ENCODE measurements at regions of chr6 and their contacts with region 1.

Region 1: GRCh38 chr6:108616544-108616943 is 55.8 kb downstream of the FOXO3 start:
- DNase-seq: no peak
- ATAC-seq: no peak
- H3K4me3 ChIP-seq: no peak overlapping the region
- H3K27ac ChIP-seq: peak overlapping the region in 1 of 10 donors; percentile 6
- H3K4me1 ChIP-seq: peaks cover 17 to 92% (median 80%) of the 10 kb centered on the region in 9 donors
- H3K27me3 ChIP-seq: no peaks in the 10 kb centered on the region
- CTCF ChIP-seq: no peak

Region 2: DNA sequence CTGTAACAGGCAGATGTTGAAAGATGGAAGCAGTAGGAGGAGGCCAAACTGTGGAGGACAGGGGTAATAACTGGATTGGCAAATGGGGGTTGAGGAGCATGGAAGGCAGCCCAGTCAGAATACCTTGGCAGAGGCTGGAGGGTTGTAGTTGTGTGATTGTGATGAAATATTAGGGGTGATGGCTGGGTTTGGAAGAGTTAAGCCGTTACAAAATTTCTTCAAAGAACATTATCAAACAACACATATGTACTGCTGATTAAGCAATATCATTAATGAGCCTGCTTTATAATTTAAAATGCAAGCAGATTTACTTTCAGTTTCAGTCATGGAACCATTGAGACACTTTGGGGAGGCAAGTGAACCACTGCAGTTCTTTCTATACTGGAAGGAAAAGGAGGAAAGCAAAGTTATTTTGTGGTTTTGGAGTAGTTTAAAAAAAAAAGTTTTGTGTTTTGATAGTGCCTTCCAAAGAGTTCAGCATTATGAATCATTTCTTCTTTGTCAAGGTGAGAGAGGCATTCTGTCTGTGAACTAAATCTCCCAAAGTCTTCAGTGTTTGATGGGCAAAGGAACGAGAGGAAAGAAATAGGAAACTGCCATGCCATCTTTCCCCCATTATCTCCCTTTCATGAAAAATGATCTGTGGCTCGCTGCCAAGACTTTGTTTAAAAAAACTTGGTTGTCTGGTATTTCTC is 35.2 kb before region 1 on chr6:
- intact Hi-C with region 1: loop called in 1 of 10 experiments (anchors 5 kb)
- DNase-seq: no peak
- ATAC-seq: peak in 4 of 8 donors; percentile 10 to 58 (median 34)
- H3K4me3 ChIP-seq: peak overlapping the region in 1 of 10 donors; percentile 11
- H3K27ac ChIP-seq: peak overlapping the region; percentile 9 to 65 (median 52)
- H3K4me1 ChIP-seq: peaks cover 38 to 98% (median 94%) of the 10 kb centered on the region in 9 donors
- H3K27me3 ChIP-seq: no peaks in the 10 kb centered on the region
- CTCF ChIP-seq: no peak

Region 3: GRCh38 chr6:109252261-109253041 is 635.9 kb after region 1 on chr6:
- intact Hi-C with region 1: no loop called
- DNase-seq: no peak
- ATAC-seq: no peak
- H3K4me3 ChIP-seq: no peak overlapping the region
- H3K27ac ChIP-seq: no peak overlapping the region
- H3K4me1 ChIP-seq: peaks cover 0 to 12% (median 0%) of the 10 kb centered on the region in 9 donors
- H3K27me3 ChIP-seq: no peaks in the 10 kb centered on the region
- CTCF ChIP-seq: no peak

Measured in heart right ventricle (tissue), 16 donors.